IMR-90 (cell line): ENCODE measurements at regions of chr11 and their contacts with region 1.

Region 1: DNA sequence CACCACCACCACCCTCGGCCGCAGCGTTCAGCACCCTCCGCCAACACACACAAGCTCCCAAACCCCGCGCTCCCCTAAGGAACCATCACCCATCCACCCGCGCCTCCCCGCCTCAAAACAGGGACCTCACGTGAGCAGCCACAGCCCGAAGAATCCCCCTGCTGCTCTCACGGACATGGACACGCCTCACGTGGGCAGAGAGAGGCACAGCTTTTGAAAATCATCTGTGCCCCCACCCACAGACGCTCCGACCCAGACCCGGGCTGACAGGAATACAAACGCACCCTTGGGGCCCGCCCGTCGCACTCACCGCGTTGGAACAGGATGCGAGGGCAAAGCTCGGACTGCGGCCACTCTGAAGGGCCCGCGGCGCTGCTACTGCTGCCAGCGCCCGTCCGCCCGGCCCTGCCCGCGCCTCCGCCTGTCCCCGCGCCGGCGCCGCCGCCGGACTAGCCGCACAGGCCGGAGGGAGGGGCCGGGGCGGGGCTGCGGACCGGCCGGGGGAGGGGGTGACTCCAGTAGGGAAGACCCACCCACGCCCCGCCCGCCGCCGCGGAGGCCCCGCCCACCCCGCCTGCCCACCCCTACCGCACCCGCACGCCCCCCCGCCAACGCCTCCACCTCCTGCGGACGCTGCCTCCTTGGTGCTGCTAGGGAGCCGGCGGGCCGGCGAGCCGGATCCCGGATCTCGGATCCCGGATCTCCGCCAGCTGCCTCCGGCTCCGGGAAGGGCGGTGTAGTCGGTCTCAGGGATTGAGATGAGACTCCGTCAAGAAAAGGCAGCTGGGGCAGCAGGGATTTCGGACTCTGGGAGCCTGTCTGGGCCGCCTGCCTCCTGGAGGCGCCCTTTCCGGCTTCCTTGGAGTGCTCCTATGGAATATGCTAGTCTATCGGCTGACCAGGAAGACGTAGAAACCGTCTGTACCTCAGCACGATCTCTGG is at the start of gene TRIM3:
- DNase-seq: peak; percentile 80
- ATAC-seq: peak; percentile 90
- H3K4me3 ChIP-seq: peak within 1 kb of the TSS; percentile 99
- H3K27ac ChIP-seq: peak within 1 kb of the TSS; percentile 87
- H3K4me1 ChIP-seq: peaks cover 6% of the 10 kb centered on the region
- H3K27me3 ChIP-seq: no peaks in the 10 kb centered on the region
- CTCF ChIP-seq: peak; percentile 47
- POLR2A ChIP-seq: peak; percentile 81
- RAD21 ChIP-seq: peak; percentile 16; the same call in 1 of the 2 replicates
- total RNA-seq, gene TRIM3: 13.8 and 14.2 TPM in 2 replicates

Region 2: DNA sequence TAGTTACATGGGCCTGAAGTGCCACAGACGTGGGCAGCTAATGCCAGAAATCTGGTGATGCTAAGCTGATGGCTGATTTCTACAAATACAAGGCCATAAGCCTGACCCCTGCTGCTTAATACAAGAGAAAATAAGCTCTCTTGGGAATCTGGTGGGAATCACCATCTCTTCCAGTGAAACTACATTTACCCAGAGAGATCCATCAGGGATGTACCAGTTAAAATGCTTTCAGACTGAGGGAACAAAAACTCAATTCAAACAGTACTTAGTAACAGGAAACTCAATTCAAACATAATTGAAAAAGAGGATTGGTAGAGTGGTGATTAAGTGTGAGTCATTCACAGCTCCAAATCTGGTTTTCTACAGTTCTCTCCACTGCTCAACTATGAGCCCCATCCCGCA is 151.8 kb before region 1 on chr11:
- CTCF ChIA-PET with region 1: no interaction called
- POLR2A ChIA-PET with region 1: no interaction called
- dilution Hi-C with region 1: no loop called
- in situ Hi-C with region 1: no loop called
- intact Hi-C with region 1: loop called (anchors 1 kb)
- DNase-seq: peak; percentile 82
- ATAC-seq: peak; percentile 2; the same call in 1 of the 2 replicates
- H3K4me3 ChIP-seq: no peak overlapping the region
- H3K27ac ChIP-seq: peak overlapping the region; percentile 80
- H3K4me1 ChIP-seq: peaks cover 15% of the 10 kb centered on the region
- H3K27me3 ChIP-seq: no peaks in the 10 kb centered on the region
- CTCF ChIP-seq: no peak
- POLR2A ChIP-seq: no peak
- RAD21 ChIP-seq: no peak

Region 3: DNA sequence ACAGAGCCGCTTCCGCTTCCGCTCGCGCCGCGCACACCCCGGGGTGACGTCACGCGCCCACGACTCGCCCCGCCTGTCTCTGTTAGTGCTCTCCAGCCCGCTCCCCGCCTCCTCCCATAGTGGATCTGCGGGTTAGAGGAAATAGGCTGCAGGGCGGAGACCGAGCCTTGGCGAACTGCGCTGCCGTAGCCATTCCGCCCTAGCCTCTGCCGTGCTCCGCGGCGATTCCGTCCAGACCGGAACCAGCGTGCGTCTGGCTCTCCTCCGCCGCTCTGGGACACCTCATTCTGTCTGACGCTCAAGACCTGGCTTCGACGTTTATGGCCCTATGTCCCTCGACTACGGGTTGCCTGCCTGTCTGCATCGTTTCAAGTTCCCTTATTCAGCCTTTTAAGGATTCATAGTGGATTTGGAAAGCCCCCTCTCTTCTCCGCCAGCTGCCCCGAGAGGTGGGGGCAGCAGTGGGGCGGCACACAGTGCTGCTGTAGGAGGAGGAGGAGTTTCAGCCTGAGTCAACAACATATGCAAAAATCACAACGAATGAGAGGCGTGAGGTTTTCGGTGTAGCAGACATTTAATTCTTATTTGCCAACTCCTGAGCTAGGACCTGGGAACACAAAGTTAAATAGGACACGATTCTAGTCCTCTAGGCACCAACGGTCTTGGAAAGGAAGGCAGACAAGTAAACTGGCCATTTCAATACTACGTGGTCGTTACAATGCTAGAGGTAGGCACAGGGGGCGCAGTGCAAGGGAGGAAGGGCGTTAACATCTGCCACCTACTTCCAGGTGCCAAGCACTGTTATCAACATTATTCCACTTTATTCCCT is 138.7 kb after region 1 on chr11 and contains the start of gene TAF10:
- CTCF ChIA-PET with region 1: no interaction called
- POLR2A ChIA-PET with region 1: no interaction called
- dilution Hi-C with region 1: no loop called
- in situ Hi-C with region 1: no loop called
- intact Hi-C with region 1: loop called (anchors 1 kb)
- DNase-seq: peak; percentile 96
- ATAC-seq: peak; percentile 91
- H3K4me3 ChIP-seq: peak within 1 kb of the TSS; percentile 67
- H3K27ac ChIP-seq: peak within 1 kb of the TSS; percentile 99
- H3K4me1 ChIP-seq: peaks cover 29% of the 10 kb centered on the region
- H3K27me3 ChIP-seq: no peaks in the 10 kb centered on the region
- CTCF ChIP-seq: peak; percentile 39
- POLR2A ChIP-seq: peak; percentile 89
- RAD21 ChIP-seq: peak; percentile 17
- total RNA-seq, gene TAF10: 18.6 and 24.4 TPM in 2 replicates

Region 4: GRCh38 chr11:7154881-7155361 is 681.2 kb after region 1 on chr11:
- CTCF ChIA-PET with region 1: no interaction called
- POLR2A ChIA-PET with region 1: no interaction called
- dilution Hi-C with region 1: no loop called
- in situ Hi-C with region 1: no loop called
- intact Hi-C with region 1: no loop called
- DNase-seq: no peak
- ATAC-seq: no peak
- H3K4me3 ChIP-seq: no peak overlapping the region
- H3K27ac ChIP-seq: no peak overlapping the region
- H3K4me1 ChIP-seq: no peaks in the 10 kb centered on the region
- H3K27me3 ChIP-seq: no peaks in the 10 kb centered on the region
- CTCF ChIP-seq: no peak
- POLR2A ChIP-seq: no peak
- RAD21 ChIP-seq: no peak